K562 (cell line): ENCODE measurements at regions of chr9 and their contacts with region 1.

Region 1: GRCh38 chr9:36328798-36329411 is 70.7 kb upstream of the GNE start:
- DNase-seq: peak; percentile 43 to 73 (median 48)
- ATAC-seq: peak; percentile 90
- H3K4me3 ChIP-seq: no peak overlapping the region
- H3K27ac ChIP-seq: no peak overlapping the region
- H3K4me1 ChIP-seq: no peaks in the 10 kb centered on the region; a peak in 1 of 5 replicates
- H3K27me3 ChIP-seq: no peaks in the 10 kb centered on the region
- CTCF ChIP-seq: peak; percentile 60 to 78 (median 63); a peak in 5 of 6 replicates
- EP300 ChIP-seq: no peak
- POLR2A ChIP-seq: no peak
- RAD21 ChIP-seq: peak; percentile 71 to 94

Region 2: GRCh38 chr9:36102742-36103495 is 226.0 kb before region 1 on chr9:
- CTCF ChIA-PET with region 1: no interaction called
- POLR2A ChIA-PET with region 1: no interaction called
- in situ Hi-C with region 1: no loop called
- intact Hi-C with region 1: loop called (anchors 2 kb)
- DNase-seq: peak; percentile 56 to 78 (median 59)
- ATAC-seq: peak; percentile 99
- H3K4me3 ChIP-seq: no peak overlapping the region
- H3K27ac ChIP-seq: no peak overlapping the region
- H3K4me1 ChIP-seq: no peaks in the 10 kb centered on the region; a peak in 1 of 5 replicates
- H3K27me3 ChIP-seq: no peaks in the 10 kb centered on the region
- CTCF ChIP-seq: peak; percentile 69 to 75 (median 74)
- EP300 ChIP-seq: no peak
- POLR2A ChIP-seq: no peak
- RAD21 ChIP-seq: peak; percentile 45 to 81

Region 3: DNA sequence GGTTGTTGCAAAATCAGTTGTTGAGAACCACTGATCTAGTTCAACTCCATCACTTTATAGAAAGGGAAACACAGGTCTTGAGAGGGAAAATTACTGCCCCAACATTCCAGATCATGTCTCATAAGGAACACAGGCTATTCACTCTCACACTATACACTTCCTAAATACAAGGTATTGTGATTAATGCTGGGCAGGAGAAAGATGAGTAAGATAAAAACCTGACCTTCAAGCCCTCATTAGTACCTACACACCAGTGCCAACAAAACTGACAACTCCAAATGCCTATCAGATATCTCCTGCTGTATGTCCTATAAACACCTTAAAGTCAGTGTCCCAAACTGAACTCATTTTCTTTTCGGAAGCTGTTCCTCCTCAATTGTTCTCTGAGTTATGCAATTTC is 78.8 kb before region 1 on chr9:
- CTCF ChIA-PET with region 1: interaction called, 31 read pairs
- POLR2A ChIA-PET with region 1: interaction called, 3 read pairs
- in situ Hi-C with region 1: loop called (anchors 5 kb)
- intact Hi-C with region 1: loop called (anchors 1 kb)
- DNase-seq: no peak
- ATAC-seq: no peak
- H3K4me3 ChIP-seq: no peak overlapping the region
- H3K27ac ChIP-seq: no peak overlapping the region
- H3K4me1 ChIP-seq: no peaks in the 10 kb centered on the region; a peak in 1 of 5 replicates
- H3K27me3 ChIP-seq: no peaks in the 10 kb centered on the region
- CTCF ChIP-seq: no peak
- EP300 ChIP-seq: no peak
- POLR2A ChIP-seq: no peak
- RAD21 ChIP-seq: no peak

Region 4: GRCh38 chr9:36258208-36258988 is 70.5 kb before region 1 on chr9 and contains the start of gene GNE:
- CTCF ChIA-PET with region 1: interaction called, 4 read pairs
- POLR2A ChIA-PET with region 1: no interaction called
- in situ Hi-C with region 1: loop called (anchors 5 kb)
- intact Hi-C with region 1: loop called (anchors 2 kb)
- DNase-seq: peak; percentile 89 to 96 (median 92)
- ATAC-seq: peak; percentile 97
- H3K4me3 ChIP-seq: peak within 1 kb of the TSS; percentile 80
- H3K27ac ChIP-seq: peak within 1 kb of the TSS; percentile 68
- H3K4me1 ChIP-seq: peaks cover 0 to 3% of the 10 kb centered on the region in 2 experiments; a peak in 2 of 5 replicates
- H3K27me3 ChIP-seq: no peaks in the 10 kb centered on the region
- CTCF ChIP-seq: no peak
- EP300 ChIP-seq: no peak
- POLR2A ChIP-seq: peak; percentile 91
- RAD21 ChIP-seq: no peak
- polyA plus RNA-seq, gene GNE: 5.1 to 6.3 TPM